Sciatic nerve (tissue), 2 donors: ENCODE measurements at regions of chr3 and their contacts with region 1.

Region 1: DNA sequence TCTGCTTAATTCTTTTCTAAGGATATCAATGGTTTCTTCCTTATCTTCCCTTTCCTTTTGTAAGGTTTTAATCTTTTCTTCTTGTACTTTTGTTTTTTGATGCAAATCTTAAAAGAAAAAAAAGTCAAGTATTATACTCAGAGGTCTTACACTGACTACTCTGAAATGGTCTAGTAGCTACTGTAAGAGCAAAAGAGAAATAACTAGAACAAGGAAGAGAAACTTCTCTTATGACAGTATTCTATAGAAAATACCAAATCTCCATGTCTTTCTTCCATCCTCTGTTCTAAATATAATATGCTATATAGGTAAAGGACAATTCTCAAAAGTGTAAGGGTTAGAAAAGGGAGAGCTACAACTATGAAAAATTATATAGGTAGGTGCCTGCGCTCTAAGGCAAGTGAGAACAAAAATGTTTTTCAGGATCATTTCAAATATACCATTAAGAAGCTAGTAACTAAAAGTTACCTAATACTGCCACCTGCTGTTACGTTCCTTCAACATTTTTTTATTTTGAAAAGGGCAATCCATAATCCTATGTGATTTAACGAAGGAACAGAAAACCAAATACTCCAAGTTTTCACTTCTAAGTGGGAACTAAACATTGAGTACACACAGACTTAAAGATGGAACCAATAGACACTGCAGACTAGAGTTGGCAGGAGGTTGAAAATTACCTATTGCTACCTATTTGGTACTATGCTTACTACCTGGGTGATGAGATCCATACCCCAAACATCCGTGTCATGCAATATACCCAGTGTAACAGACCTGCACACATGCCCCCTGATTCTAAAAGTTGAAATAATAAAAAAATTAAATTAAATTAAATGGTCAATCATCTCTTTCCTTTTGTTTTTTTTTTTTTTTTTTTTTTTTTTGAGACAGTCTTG is 36.7 kb downstream of the CIP2A start:
- DNase-seq: no peak
- ATAC-seq: peak; percentile 58

Region 2: DNA sequence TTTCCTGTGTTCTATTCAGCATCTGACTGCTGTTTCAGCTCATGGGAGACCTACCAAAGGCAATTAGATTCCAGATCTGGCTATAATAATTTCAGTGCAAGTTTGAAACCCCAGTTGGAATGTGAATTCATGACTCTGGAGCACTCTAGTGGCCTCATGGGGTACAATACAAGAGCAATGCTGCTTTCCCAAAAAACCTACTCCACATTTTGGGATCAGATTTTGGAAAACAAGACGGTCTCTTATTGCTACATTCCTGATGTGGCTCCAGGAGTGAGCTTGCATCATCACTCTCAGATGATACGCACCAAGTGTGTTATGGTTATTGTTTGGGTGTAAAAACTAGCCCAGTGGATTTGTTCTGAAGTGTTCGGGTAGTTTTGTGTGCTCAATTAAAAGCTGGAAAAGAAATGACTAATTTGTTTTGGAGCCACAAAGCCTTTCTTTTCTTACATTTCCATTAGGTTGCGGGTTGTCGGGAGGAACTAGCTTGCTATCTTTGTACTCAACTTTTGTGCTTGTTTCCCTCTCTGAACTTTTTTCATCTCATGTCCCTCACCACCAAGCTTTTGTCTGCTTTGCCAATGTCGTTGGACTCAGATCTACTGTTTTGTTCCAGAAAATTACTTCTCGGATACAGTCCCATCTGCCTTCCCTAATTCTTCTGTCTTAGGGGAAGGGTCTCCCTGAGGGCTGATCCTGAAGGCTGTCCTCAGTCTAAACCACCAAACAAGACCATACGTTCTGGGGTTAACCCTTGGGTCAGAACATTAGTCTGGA is 757.7 kb before region 1 on chr3:
- intact Hi-C with region 1: no loop called
- DNase-seq: no peak
- ATAC-seq: peak; percentile 94

Region 3: DNA sequence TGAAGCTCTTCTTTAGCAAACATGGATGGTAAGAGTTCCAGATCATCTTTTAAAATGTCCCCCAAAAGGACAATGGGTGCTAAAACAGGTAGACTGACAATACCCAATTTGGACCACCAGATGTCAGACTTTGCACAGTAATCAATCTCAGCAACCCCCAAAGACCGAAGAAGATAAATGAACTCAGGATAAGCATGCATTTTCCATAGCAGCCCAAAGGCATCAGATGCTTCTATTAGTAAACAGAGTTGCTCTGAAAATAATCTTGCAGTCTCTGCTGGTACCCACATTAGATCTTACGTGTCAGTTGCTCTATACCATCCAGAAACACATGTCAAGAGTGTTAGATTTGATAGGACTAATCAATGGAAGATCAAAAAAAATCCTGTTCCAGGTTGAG is 62.7 kb before region 1 on chr3:
- intact Hi-C with region 1: loop called (anchors 2 kb)
- DNase-seq: no peak
- ATAC-seq: peak; percentile 77